ENCODE measurements at regions of chr10 and their contacts with region 1.

Region 1: GRCh38 chr10:3785257-3785850 is 345 bp upstream of the KLF6 start:
- DNase-seq: peak; percentile 99 to 100
- ATAC-seq: peak; percentile 93
- H3K4me3 ChIP-seq: peak overlapping the region; percentile 79 to 92
- H3K27ac ChIP-seq: peak overlapping the region; percentile 87 to 99
- H3K4me1 ChIP-seq: no peaks in the 10 kb centered on the region
- H3K27me3 ChIP-seq: no peaks in the 10 kb centered on the region

Region 2: DNA sequence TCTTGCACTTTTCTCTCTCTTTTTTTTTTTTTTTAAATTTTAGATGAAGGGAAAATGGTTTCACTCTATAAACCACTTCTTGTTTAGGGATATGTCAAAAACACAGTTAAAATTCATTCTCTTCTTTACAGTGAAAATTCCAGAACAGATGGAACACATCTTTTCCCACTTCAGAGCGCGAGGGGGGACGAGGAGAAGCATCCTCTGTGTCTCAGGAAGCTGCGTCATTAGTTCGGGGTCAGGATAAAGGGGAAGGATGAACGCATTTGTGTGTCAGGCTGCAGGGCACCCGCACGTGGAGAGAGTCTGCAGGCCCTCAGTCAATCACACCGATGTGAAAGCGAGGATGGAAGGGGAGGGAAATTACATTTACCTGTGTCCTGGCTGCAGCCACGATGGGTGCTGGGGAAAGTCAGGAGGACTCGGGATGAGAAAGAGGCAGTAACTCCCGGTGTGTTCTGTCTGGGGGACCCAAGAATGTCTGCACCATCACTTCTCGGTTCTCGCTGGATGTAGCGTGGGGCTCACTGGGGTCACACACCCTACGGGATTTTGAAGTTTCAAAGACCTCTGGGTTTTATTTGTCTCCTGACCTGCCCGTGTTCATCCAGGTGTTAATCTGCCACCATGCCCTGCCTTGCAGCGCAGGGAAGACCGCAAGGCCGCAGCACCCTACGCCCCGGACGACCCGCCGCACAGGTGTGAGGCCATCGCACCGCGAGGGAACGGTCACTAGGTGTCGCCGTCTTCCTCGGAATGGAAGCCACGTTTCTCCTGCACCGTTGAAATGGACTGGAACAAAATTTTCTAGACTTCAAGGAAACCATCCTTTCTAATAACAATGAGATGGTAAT is 546.1 kb before region 1 on chr10:
- intact Hi-C with region 1: loop called in 1 of 2 experiments (anchors 2 kb)
- DNase-seq: peak; percentile 82 to 92
- ATAC-seq: peak; percentile 87
- H3K4me3 ChIP-seq: no peak overlapping the region
- H3K27ac ChIP-seq: no peak overlapping the region
- H3K4me1 ChIP-seq: no peaks in the 10 kb centered on the region
- H3K27me3 ChIP-seq: no peaks in the 10 kb centered on the region

Region 3: DNA sequence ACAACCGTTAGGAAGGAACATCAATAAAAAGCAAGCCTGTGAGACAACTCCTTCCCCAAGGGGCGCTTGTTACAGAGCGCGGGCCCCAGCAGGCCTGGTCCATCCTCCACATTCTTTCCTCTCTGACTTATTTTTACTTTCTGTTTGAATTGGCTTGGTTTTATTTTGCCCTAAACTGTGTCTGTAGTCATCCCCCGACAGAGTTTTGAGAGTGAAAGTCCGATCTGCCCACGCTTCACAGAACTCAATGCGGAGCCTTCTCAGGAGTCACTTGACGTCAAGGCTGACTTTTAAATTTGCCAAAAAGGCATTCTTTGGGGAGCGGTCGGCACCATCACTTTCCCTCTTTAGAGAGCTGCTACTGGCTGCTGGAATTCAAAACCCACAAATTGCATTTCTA is 149.8 kb after region 1 on chr10:
- intact Hi-C with region 1: loop called (anchors 5 kb)
- DNase-seq: peak in 1 of 2 donors; percentile 63
- ATAC-seq: peak; percentile 78
- H3K4me3 ChIP-seq: peak overlapping the region in 1 of 2 donors; percentile 13
- H3K27ac ChIP-seq: peak overlapping the region; percentile 72 to 74
- H3K4me1 ChIP-seq: peaks cover 2 to 11% of the 10 kb centered on the region in 2 donors
- H3K27me3 ChIP-seq: no peaks in the 10 kb centered on the region

Region 4: DNA sequence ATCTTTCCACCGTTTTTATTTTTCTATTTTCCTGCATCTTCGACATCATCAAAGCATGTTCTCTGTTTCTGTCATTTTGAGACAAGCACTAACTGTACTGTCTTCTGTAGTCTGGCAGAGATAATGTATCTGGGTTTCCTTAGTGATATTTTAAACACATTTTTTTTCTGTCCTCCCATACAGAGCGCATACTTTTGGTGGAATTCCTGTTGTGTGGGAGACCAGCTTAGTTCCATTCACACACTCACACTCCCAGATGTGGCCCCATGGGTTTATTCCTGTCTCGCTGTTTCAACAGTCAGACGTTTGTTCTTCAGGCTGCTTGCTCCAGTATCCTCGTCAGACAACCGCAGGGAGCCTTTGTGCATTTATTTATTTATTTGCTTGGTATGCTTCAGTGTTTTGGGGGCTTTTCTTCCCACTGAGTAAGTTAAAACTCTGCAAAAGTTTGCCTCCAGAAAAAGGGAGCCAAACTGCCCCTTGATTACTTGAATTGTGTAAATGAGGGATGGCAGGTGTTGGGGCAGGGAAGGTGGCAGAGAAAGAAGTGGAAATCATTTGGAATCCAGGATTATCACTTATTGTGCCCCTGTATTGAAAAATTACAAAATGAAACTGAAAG is 456.5 kb after region 1 on chr10:
- intact Hi-C with region 1: loop called (anchors 2 to 5 kb)
- DNase-seq: no peak
- ATAC-seq: peak; percentile 73
- H3K4me3 ChIP-seq: peak overlapping the region; percentile 67 to 90
- H3K27ac ChIP-seq: peak overlapping the region; percentile 96 to 99
- H3K4me1 ChIP-seq: peaks cover 0 to 3% of the 10 kb centered on the region in 2 donors
- H3K27me3 ChIP-seq: no peaks in the 10 kb centered on the region

Region 5: GRCh38 chr10:4353964-4354363 is 568.6 kb after region 1 on chr10:
- intact Hi-C with region 1: loop called (anchors 5 to 10 kb)
- DNase-seq: no peak
- ATAC-seq: peak; percentile 40
- H3K4me3 ChIP-seq: no peak overlapping the region
- H3K27ac ChIP-seq: peak overlapping the region in 1 of 2 donors; percentile 77
- H3K4me1 ChIP-seq: peaks cover 11 to 14% of the 10 kb centered on the region in 2 donors
- H3K27me3 ChIP-seq: no peaks in the 10 kb centered on the region

Region 6: DNA sequence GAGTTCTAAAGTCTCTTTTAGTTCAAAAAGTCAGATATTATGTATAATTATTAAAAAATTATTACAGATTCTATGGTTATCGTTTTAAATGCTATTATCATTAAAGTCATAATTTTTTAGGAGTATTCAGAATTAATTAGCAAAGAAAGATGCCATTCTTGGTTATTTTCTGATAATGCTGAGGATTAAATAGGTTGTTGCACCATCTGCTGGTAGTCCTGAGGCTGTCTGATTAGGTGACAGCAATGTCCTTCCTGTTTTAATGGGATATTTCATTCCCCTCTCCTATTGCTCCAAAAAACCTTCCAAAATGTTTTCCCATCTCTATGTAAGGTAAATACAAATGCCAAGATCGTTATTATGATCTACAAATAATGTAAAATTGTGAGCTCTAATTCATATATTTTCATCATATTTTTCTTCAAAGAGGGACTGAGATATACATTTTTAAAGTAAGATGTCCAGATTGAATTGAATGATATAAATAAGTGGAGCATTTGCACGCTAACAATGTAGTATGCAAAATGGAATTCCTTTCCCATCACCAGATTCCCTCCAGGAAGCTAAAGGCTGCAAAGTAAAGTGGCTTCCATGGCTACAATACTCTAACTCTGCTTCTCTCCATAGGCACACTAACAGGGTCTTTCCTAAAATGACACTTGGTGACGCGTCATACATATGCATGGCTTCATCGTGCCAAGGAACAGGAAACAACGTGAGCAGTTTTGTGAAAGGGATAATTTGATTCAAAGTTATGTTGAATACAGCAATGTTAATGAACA is 981.9 kb after region 1 on chr10:
- intact Hi-C with region 1: loop called in 1 of 2 experiments (anchors 5 kb)
- DNase-seq: no peak
- ATAC-seq: peak; percentile 74
- H3K4me3 ChIP-seq: no peak overlapping the region
- H3K27ac ChIP-seq: no peak overlapping the region
- H3K4me1 ChIP-seq: peaks cover 3 to 5% of the 10 kb centered on the region in 2 donors
- H3K27me3 ChIP-seq: no peaks in the 10 kb centered on the region